Heart right ventricle (tissue), 16 donors: ENCODE measurements at regions of chr9 and their contacts with region 1.

Region 1: GRCh38 chr9:33816327-33817252 is at the start of gene UBE2R2:
- DNase-seq: peak; percentile 94
- ATAC-seq: peak; percentile 89 to 94 (median 92)
- H3K4me3 ChIP-seq: peak within 1 kb of the TSS; percentile 65 to 96 (median 90)
- H3K27ac ChIP-seq: peak within 1 kb of the TSS; percentile 98 to 100 (median 99)
- H3K4me1 ChIP-seq: peaks cover 6 to 63% (median 51%) of the 10 kb centered on the region in 9 donors
- H3K27me3 ChIP-seq: no peaks in the 10 kb centered on the region
- CTCF ChIP-seq: no peak
- total RNA-seq, gene UBE2R2: 38.8 to 47.9 (median 41.5) TPM

Region 2: GRCh38 chr9:33737811-33738606 is 78.6 kb before region 1 on chr9:
- intact Hi-C with region 1: no loop called
- DNase-seq: peak in 1 of 2 donors; percentile 22
- ATAC-seq: peak; percentile 28 to 74 (median 60)
- H3K4me3 ChIP-seq: no peak overlapping the region
- H3K27ac ChIP-seq: no peak overlapping the region
- H3K4me1 ChIP-seq: no peaks in the 10 kb centered on the region
- H3K27me3 ChIP-seq: peaks cover 0 to 8% (median 0%) of the 10 kb centered on the region in 7 donors
- CTCF ChIP-seq: peak; percentile 9 to 61 (median 55)

Region 3: DNA sequence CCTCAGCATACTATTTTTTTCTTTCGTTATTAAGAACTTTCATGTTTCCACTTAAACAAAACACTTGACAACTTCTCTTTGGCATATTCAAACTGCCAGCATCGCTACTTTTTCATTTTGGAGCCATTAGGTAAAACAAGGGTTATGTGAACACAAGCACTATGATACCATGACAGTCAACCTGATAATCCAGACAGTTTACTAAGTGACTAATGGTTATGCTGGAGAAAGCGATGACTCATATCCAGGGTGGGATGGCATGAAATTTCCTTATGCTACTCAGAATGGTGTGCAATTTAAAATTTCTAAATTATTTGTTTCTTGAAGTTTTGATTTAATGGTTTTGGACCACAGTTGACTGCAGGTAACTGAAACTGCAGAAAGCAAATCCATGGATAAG is 51.2 kb before region 1 on chr9:
- intact Hi-C with region 1: no loop called
- DNase-seq: no peak
- ATAC-seq: no peak
- H3K4me3 ChIP-seq: no peak overlapping the region
- H3K27ac ChIP-seq: no peak overlapping the region
- H3K4me1 ChIP-seq: no peaks in the 10 kb centered on the region
- H3K27me3 ChIP-seq: no peaks in the 10 kb centered on the region
- CTCF ChIP-seq: no peak

Region 4: DNA sequence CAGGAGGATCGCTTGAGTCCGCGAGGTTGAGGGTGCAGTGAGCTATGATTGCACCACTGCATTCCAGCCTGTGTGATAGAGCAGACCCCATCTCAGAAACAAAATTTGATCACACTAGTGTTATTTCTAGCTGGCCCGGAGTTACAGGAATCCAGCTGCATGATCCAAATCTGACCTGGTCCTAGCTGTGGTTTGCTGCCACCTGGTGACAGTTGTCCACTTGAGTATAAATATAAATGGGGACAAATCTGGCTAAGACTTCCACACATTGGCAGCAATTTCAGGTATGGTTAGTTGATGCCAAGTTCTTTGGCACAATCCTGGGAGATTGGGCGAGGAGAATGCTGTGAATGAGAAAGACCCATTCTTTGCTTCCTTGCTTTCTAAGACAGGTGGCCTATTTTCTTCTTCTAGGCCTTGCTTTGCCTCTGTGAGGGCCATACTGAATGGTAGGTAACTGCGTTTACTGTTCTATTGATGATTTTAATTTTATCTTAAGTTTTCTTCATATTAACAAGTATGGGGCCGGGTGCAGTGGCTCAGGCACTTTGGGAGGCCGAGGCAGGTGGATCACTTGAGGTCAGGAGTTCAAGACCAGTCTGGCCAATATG is 35.7 kb after region 1 on chr9:
- intact Hi-C with region 1: loop called (anchors 1 to 5 kb)
- DNase-seq: peak; percentile 44 to 80
- ATAC-seq: peak; percentile 53 to 90 (median 84)
- H3K4me3 ChIP-seq: no peak overlapping the region
- H3K27ac ChIP-seq: peak overlapping the region in 8 of 10 donors; percentile 7 to 49 (median 31)
- H3K4me1 ChIP-seq: peaks cover 3 to 68% (median 48%) of the 10 kb centered on the region in 9 donors
- H3K27me3 ChIP-seq: no peaks in the 10 kb centered on the region
- CTCF ChIP-seq: peak; percentile 52 to 79 (median 67)

Region 5: GRCh38 chr9:33881635-33882034 is 65.0 kb after region 1 on chr9:
- intact Hi-C with region 1: no loop called
- DNase-seq: no peak
- ATAC-seq: peak in 4 of 8 donors; percentile 23 to 68 (median 50)
- H3K4me3 ChIP-seq: no peak overlapping the region
- H3K27ac ChIP-seq: peak overlapping the region in 2 of 10 donors; percentile 13 to 43
- H3K4me1 ChIP-seq: peaks cover 11 to 88% (median 62%) of the 10 kb centered on the region in 9 donors
- H3K27me3 ChIP-seq: no peaks in the 10 kb centered on the region
- CTCF ChIP-seq: no peak

Region 6: GRCh38 chr9:33919276-33919897 is 102.8 kb after region 1 on chr9:
- intact Hi-C with region 1: loop called in 8 of 10 experiments (anchors 5 to 10 kb)
- DNase-seq: no peak
- ATAC-seq: peak in 3 of 8 donors; percentile 47 to 55 (median 51)
- H3K4me3 ChIP-seq: no peak overlapping the region
- H3K27ac ChIP-seq: peak overlapping the region in 3 of 10 donors; percentile 45 to 68 (median 65)
- H3K4me1 ChIP-seq: peaks cover 0 to 45% (median 16%) of the 10 kb centered on the region in 9 donors
- H3K27me3 ChIP-seq: no peaks in the 10 kb centered on the region
- CTCF ChIP-seq: no peak

Region 7: GRCh38 chr9:33924978-33925797 is 108.6 kb after region 1 on chr9:
- intact Hi-C with region 1: loop called in 6 of 10 experiments (anchors 5 to 10 kb)
- DNase-seq: peak in 1 of 2 donors; percentile 65
- ATAC-seq: peak in 7 of 8 donors; percentile 53 to 76 (median 70)
- H3K4me3 ChIP-seq: no peak overlapping the region
- H3K27ac ChIP-seq: peak overlapping the region in 8 of 10 donors; percentile 16 to 65 (median 23)
- H3K4me1 ChIP-seq: peaks cover 5 to 47% (median 24%) of the 10 kb centered on the region in 9 donors
- H3K27me3 ChIP-seq: no peaks in the 10 kb centered on the region
- CTCF ChIP-seq: peak; percentile 29 to 79 (median 66)

Region 8: GRCh38 chr9:33988219-33988890 is 171.8 kb after region 1 on chr9:
- intact Hi-C with region 1: no loop called
- DNase-seq: no peak
- ATAC-seq: no peak
- H3K4me3 ChIP-seq: no peak overlapping the region
- H3K27ac ChIP-seq: no peak overlapping the region
- H3K4me1 ChIP-seq: no peaks in the 10 kb centered on the region
- H3K27me3 ChIP-seq: no peaks in the 10 kb centered on the region
- CTCF ChIP-seq: no peak

Region 9: GRCh38 chr9:34025062-34025461 is 208.5 kb after region 1 on chr9:
- intact Hi-C with region 1: loop called in 1 of 10 experiments (anchors 10 kb)
- DNase-seq: peak in 1 of 2 donors; percentile 22
- ATAC-seq: peak; percentile 69 to 96 (median 90)
- H3K4me3 ChIP-seq: no peak overlapping the region
- H3K27ac ChIP-seq: peak overlapping the region in 9 of 10 donors; percentile 33 to 69 (median 60)
- H3K4me1 ChIP-seq: peaks cover 0 to 28% (median 8%) of the 10 kb centered on the region in 9 donors
- H3K27me3 ChIP-seq: no peaks in the 10 kb centered on the region
- CTCF ChIP-seq: no peak

Region 10: DNA sequence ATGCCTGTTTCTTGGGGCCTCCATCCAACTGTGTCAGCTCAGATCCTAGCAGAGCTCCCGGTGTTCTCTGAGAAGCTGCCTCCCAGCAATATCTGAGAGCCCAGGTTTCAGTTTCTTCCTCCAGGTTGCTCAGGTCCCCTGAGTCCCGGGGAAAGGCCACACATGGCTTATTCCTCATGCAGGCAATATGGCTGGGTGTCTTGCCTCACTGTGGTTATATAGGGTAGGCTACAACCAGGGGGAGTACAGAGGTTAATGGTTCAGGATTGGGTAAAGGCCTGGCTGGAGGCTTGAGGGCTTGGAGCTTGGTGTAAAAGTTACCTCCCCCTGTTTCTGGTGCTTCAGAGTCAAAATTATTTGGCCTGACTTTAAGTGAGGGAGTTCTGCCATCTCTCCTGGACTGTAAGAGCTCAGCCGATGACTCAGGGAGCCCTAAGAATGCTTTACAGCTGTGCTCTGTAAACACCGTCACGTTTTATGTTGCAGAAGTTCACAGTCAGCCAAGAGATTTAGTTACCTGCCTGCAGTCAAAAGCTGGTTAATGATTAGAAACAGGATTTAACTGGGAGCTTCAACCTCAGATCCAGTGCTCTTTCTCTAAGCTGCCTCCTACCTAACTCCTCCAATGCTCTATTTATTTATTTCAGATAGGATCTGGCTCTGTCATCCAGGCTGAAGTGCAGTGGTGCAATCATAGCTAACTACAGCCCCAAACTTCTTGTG is 256.4 kb after region 1 on chr9:
- intact Hi-C with region 1: loop called in 3 of 10 experiments (anchors 5 to 10 kb)
- DNase-seq: no peak
- ATAC-seq: peak in 4 of 8 donors; percentile 26 to 69 (median 52)
- H3K4me3 ChIP-seq: no peak overlapping the region
- H3K27ac ChIP-seq: peak overlapping the region in 2 of 10 donors; percentile 8 to 10
- H3K4me1 ChIP-seq: peaks cover 0 to 6% (median 0%) of the 10 kb centered on the region in 9 donors
- H3K27me3 ChIP-seq: no peaks in the 10 kb centered on the region
- CTCF ChIP-seq: no peak